ENCODE measurements at regions of chr1 and their contacts with region 1.

Region 1: GRCh38 chr1:33094971-33095604 is 14.1 kb downstream of the AZIN2 start:
- DNase-seq: peak; percentile 47 to 58
- H3K4me3 ChIP-seq: no peak overlapping the region
- H3K27ac ChIP-seq: no peak overlapping the region
- H3K4me1 ChIP-seq: peaks cover 19% of the 10 kb centered on the region
- H3K27me3 ChIP-seq: no peaks in the 10 kb centered on the region
- CTCF ChIP-seq: peak; percentile 98

Region 2: GRCh38 chr1:32400876-32401631 is 694.0 kb before region 1 on chr1:
- CTCF ChIA-PET with region 1: no interaction called
- POLR2A ChIA-PET with region 1: no interaction called
- intact Hi-C with region 1: loop called (anchors 5 kb)
- DNase-seq: peak; percentile 62 to 77
- H3K4me3 ChIP-seq: no peak overlapping the region
- H3K27ac ChIP-seq: no peak overlapping the region
- H3K4me1 ChIP-seq: peaks cover 4% of the 10 kb centered on the region
- H3K27me3 ChIP-seq: no peaks in the 10 kb centered on the region
- CTCF ChIP-seq: peak; percentile 95

Region 3: DNA sequence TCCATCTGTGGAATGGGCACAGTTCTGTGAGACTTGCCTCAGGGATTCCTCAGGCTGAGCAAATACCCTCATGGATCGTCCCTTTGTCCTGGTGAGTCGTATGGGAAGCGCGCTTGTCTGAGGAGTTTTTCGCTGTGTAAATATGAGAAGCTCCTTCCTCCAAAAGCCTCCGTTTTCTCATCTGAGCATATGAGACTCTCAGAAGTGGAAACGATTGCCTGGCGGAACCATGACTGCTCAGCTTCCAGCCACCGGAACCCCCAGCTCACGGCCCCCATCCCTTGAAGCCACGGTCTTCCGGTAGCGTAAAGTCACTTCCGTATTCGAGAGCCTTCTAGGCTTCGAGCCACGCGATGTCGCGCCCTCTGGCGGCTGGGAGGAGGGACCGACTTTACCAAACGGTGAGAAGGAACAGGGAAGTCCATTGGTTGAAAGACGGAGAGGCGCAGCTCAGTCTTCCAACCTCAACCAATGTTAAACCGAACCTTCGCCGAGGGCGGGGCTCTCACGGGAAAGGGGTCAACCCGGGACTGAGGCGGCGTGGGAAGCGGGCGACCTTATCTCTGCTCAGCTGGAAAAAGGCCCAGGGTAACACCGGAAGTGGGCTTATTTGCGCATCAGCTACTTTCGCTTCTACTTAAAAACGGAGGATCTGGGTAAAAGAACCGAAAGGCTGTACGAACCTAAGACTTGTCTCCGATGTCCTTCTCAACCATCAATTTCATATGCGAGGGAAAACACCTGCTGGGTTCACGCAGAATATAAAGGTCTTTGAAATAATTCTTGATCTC is 32.1 kb after region 1 on chr1:
- CTCF ChIA-PET with region 1: interaction called, 7 read pairs
- POLR2A ChIA-PET with region 1: no interaction called
- intact Hi-C with region 1: loop called (anchors 2 kb)
- DNase-seq: peak; percentile 97 to 99
- H3K4me3 ChIP-seq: peak overlapping the region; percentile 85
- H3K27ac ChIP-seq: peak overlapping the region; percentile 77
- H3K4me1 ChIP-seq: peaks cover 28% of the 10 kb centered on the region
- H3K27me3 ChIP-seq: no peaks in the 10 kb centered on the region
- CTCF ChIP-seq: peak; percentile 88

Region 4: GRCh38 chr1:33367485-33368405 is 272.7 kb after region 1 on chr1:
- CTCF ChIA-PET with region 1: interaction called, 3 read pairs
- POLR2A ChIA-PET with region 1: no interaction called
- intact Hi-C with region 1: loop called (anchors 1 kb)
- DNase-seq: peak; percentile 48 to 80
- H3K4me3 ChIP-seq: no peak overlapping the region
- H3K27ac ChIP-seq: no peak overlapping the region
- H3K4me1 ChIP-seq: no peaks in the 10 kb centered on the region; the same call in 1 of the 2 replicates
- H3K27me3 ChIP-seq: no peaks in the 10 kb centered on the region
- CTCF ChIP-seq: peak; percentile 94

Region 5: DNA sequence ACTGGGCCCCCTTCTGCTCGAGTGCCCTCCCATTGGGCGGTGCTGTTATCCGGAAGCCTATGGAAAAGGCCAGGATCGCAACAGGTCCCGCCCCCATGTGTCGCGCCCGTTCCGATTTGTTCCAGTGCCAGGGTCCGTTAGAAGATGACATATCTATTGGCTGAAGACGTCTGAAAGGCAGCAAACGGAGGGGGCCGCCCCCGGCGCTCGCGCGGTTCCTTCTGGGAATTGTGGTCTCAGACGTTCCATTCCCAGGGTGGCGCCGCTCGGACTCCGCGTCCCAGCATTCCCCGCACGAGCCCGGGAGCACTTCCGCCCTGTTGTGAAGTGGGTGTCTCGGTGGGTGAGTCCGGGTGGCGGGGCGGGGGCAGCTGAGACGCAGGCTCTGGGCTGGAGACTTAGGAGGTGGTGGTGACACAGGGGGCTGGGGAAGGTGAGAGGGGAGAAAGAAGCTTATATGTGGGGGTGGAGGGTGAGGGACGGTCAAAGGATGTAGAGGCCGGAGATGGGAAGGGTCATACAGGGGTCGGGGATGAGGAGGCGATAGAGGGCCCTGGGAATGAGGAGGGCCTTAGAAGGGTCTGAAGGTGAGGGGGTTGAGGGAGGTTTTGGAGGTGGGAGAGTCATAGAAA is 377.4 kb after region 1 on chr1 and contains the start of gene ZSCAN20:
- CTCF ChIA-PET with region 1: no interaction called
- POLR2A ChIA-PET with region 1: no interaction called
- intact Hi-C with region 1: loop called (anchors 1 kb)
- DNase-seq: peak; percentile 92 to 96
- H3K4me3 ChIP-seq: peak within 1 kb of the TSS; percentile 66
- H3K27ac ChIP-seq: no peak within 1 kb of the TSS
- H3K4me1 ChIP-seq: peaks cover 10% of the 10 kb centered on the region
- H3K27me3 ChIP-seq: no peaks in the 10 kb centered on the region
- CTCF ChIP-seq: no peak
- total RNA-seq, gene ZSCAN20: 6.0 and 6.4 TPM in 2 replicates

Measured in PC-9 (cell line).